ENCODE measurements at regions of chr2 and their contacts with region 1.

Region 1: GRCh38 chr2:10659898-10660568 is 29.7 kb downstream of the NOL10 start:
- DNase-seq: peak; percentile 49
- ATAC-seq: peak; percentile 86
- H3K4me3 ChIP-seq: no peak overlapping the region
- H3K27ac ChIP-seq: no peak overlapping the region
- H3K4me1 ChIP-seq: peaks cover 7 to 34% of the 10 kb centered on the region in 2 experiments; a peak in 3 of 4 replicates
- H3K27me3 ChIP-seq: no peaks in the 10 kb centered on the region
- CTCF ChIP-seq: peak; percentile 51 to 87 (median 83)
- POLR2A ChIP-seq: no peak
- RAD21 ChIP-seq: peak; percentile 90

Region 2: GRCh38 chr2:10355471-10356458 is 304.3 kb before region 1 on chr2:
- CTCF ChIA-PET with region 1: no interaction called
- POLR2A ChIA-PET with region 1: no interaction called
- RAD21 ChIA-PET with region 1: no interaction called
- intact Hi-C with region 1: no loop called
- DNase-seq: no peak
- ATAC-seq: no peak
- H3K4me3 ChIP-seq: no peak overlapping the region
- H3K27ac ChIP-seq: no peak overlapping the region
- H3K4me1 ChIP-seq: peaks cover 9 to 12% of the 10 kb centered on the region in 2 experiments
- H3K27me3 ChIP-seq: no peaks in the 10 kb centered on the region
- CTCF ChIP-seq: no peak
- POLR2A ChIP-seq: no peak
- RAD21 ChIP-seq: no peak

Region 3: GRCh38 chr2:10452956-10453904 is 206.8 kb before region 1 on chr2:
- CTCF ChIA-PET with region 1: interaction called, 5 read pairs
- POLR2A ChIA-PET with region 1: interaction called, 8 read pairs
- RAD21 ChIA-PET with region 1: interaction called in 1 of 2 experiments, 3 read pairs
- intact Hi-C with region 1: loop called (anchors 2 kb)
- DNase-seq: no peak
- ATAC-seq: no peak
- H3K4me3 ChIP-seq: no peak overlapping the region
- H3K27ac ChIP-seq: no peak overlapping the region
- H3K4me1 ChIP-seq: peaks cover 7 to 36% of the 10 kb centered on the region in 2 experiments; a peak in 3 of 4 replicates
- H3K27me3 ChIP-seq: no peaks in the 10 kb centered on the region
- CTCF ChIP-seq: no peak
- POLR2A ChIP-seq: no peak
- RAD21 ChIP-seq: no peak